PC-3 (cell line): ENCODE measurements at regions of chrX and their contacts with region 1.

Region 1: GRCh38 chrX:124018023-124018422 is 56.5 kb downstream of the STAG2 start:
- DNase-seq: peak; percentile 31
- ATAC-seq: peak; percentile 36
- H3K4me3 ChIP-seq: no peak overlapping the region
- H3K27ac ChIP-seq: no peak overlapping the region
- H3K4me1 ChIP-seq: peaks cover 5% of the 10 kb centered on the region
- H3K27me3 ChIP-seq: no peaks in the 10 kb centered on the region
- CTCF ChIP-seq: peak; percentile 54

Region 2: DNA sequence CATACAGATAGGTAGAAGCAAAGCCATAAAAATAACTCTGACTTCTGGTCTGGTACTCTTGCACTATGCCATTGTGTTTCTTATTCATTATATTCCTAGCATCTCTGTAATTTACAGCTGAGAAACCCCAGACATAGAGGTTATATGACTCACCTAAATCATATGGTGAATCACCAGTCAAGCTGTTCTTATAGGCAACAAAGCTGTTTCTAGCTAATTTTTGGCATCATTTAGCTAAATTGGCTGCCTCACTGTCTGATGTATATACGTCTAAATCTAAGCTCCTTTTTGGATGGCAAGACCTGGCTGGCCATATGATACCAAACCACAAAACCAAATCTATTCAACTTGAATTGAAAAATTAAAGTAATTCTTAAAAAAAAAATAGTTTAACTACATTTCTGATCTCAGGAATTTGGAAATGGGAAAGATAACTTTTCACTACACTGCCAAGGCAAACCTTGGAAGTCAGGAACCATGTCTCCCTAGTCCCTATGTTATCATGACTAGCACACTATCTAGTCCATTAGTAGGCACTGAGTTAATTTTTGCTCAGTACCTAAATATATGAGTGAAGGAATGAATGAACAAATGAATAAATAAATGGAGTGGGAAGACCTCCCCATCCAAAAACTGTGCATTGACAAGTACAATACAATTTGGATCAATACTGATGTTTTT is 97.8 kb before region 1 on chrX:
- CTCF ChIA-PET with region 1: no interaction called
- POLR2A ChIA-PET with region 1: no interaction called
- intact Hi-C with region 1: no loop called
- DNase-seq: peak; percentile 75
- ATAC-seq: peak; percentile 90
- H3K4me3 ChIP-seq: no peak overlapping the region
- H3K27ac ChIP-seq: no peak overlapping the region
- H3K4me1 ChIP-seq: peaks cover 27% of the 10 kb centered on the region
- H3K27me3 ChIP-seq: no peaks in the 10 kb centered on the region
- CTCF ChIP-seq: no peak

Region 3: DNA sequence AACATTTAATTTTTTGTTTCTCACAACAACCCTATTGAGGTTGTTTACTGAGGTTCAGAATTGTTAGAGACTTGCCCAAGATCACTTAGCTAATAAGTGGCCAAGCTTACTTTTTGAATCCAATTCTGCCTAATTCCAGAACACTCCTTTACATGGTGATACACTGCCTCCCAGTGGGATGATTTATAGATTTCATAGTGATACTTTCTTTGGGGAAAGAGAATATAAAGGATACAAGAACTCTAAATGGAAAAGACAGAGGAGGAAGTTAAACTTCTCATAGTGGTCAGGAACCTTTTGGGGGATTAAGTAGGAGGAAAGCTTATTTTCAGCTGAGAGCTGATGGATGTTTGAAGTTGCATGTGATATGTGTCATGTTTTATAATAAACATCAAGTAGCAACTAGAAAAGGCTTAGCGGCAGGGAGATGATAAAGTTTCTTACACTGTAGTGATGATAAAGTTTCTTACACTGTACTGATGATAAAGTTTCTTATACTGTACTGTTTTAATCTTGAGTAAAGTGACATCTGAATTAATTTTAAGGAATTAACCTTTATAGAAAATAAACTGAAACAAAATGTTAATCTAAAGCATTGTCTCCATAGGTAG is 41.2 kb before region 1 on chrX:
- CTCF ChIA-PET with region 1: no interaction called
- POLR2A ChIA-PET with region 1: interaction called, 7 read pairs
- intact Hi-C with region 1: loop called (anchors 5 kb)
- DNase-seq: peak; percentile 69
- ATAC-seq: peak; percentile 66
- H3K4me3 ChIP-seq: no peak overlapping the region
- H3K27ac ChIP-seq: no peak overlapping the region
- H3K4me1 ChIP-seq: peaks cover 14% of the 10 kb centered on the region
- H3K27me3 ChIP-seq: no peaks in the 10 kb centered on the region
- CTCF ChIP-seq: peak; percentile 67

Region 4: DNA sequence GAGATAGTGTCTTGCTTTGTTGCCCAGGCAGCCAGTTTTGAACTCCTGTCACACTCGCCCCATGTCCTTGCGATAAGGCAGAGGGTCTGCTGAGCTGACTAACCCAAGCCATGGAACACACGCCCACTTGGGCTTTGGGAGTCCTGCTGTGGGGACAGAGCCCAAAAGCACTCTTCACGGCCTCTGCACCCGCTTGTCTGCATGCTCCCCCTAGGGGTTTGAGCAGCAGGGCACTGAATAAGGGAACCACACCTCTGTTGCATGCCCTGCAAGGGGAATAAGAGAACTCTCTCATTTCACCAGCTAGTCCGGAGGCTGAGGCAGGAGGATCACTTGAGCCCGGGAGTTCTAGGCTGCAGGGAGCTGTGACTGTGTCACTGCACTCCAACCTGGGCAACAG is 109.5 kb after region 1 on chrX:
- CTCF ChIA-PET with region 1: no interaction called
- POLR2A ChIA-PET with region 1: no interaction called
- intact Hi-C with region 1: no loop called
- DNase-seq: no peak
- ATAC-seq: no peak; the same call in 1 of the 2 replicates
- H3K4me3 ChIP-seq: no peak overlapping the region
- H3K27ac ChIP-seq: no peak overlapping the region
- H3K4me1 ChIP-seq: no peaks in the 10 kb centered on the region
- H3K27me3 ChIP-seq: no peaks in the 10 kb centered on the region
- CTCF ChIP-seq: no peak; the same call in 1 of the 2 replicates